ENCODE measurements at regions of chr2 and their contacts with region 1.

Region 1: GRCh38 chr2:84495539-84496146 is 20.7 kb upstream of the DNAH6 start:
- DNase-seq: peak in 1 of 2 donors; percentile 88
- ATAC-seq: peak; percentile 89 to 100 (median 99)
- H3K4me3 ChIP-seq: no peak overlapping the region
- H3K4me3 Mint-ChIP-seq: no peak overlapping the region
- H3K27ac ChIP-seq: no peak overlapping the region
- H3K27ac Mint-ChIP-seq: no peak overlapping the region
- H3K4me1 ChIP-seq: peaks cover 3% of the 10 kb centered on the region
- H3K4me1 Mint-ChIP-seq: peaks cover 0 to 6% of the 10 kb centered on the region in 2 donors
- H3K27me3 ChIP-seq: no peaks in the 10 kb centered on the region
- H3K27me3 Mint-ChIP-seq: peaks cover 12 to 19% of the 10 kb centered on the region in 2 donors
- CTCF ChIP-seq: peak; percentile 84

Region 2: GRCh38 chr2:84395820-84396219 is 99.8 kb before region 1 on chr2:
- intact Hi-C with region 1: no loop called
- DNase-seq: no peak
- ATAC-seq: no peak
- H3K4me3 ChIP-seq: no peak overlapping the region
- H3K4me3 Mint-ChIP-seq: no peak overlapping the region
- H3K27ac ChIP-seq: no peak overlapping the region
- H3K27ac Mint-ChIP-seq: no peak overlapping the region
- H3K4me1 ChIP-seq: no peaks in the 10 kb centered on the region
- H3K4me1 Mint-ChIP-seq: no peaks in the 10 kb centered on the region
- H3K27me3 ChIP-seq: no peaks in the 10 kb centered on the region
- H3K27me3 Mint-ChIP-seq: peaks cover 0 to 6% of the 10 kb centered on the region in 2 donors
- CTCF ChIP-seq: no peak

Region 3: DNA sequence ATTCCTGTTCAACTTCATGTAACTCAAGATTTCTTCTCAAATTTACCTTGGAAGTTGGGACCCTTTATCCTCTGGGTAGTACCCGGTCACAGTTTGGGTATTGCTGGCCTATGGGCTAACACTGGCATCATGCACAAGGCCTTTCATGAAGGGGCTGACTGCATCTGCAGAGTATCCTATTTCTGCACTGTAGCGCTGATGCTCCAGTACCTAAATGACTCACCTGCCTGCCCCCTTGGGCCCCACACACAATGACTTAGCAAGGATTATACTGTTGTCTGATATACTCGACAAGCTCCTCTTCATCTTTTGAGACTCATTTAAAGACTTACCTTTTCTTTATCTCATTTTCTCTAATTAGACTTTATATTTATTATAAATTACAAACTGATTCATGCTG is 60.5 kb after region 1 on chr2:
- intact Hi-C with region 1: no loop called
- DNase-seq: no peak
- ATAC-seq: no peak
- H3K4me3 ChIP-seq: no peak overlapping the region
- H3K4me3 Mint-ChIP-seq: no peak overlapping the region
- H3K27ac ChIP-seq: no peak overlapping the region
- H3K27ac Mint-ChIP-seq: no peak overlapping the region
- H3K4me1 ChIP-seq: no peaks in the 10 kb centered on the region
- H3K4me1 Mint-ChIP-seq: no peaks in the 10 kb centered on the region
- H3K27me3 ChIP-seq: peaks cover 2% of the 10 kb centered on the region
- H3K27me3 Mint-ChIP-seq: peaks cover 8 to 22% of the 10 kb centered on the region in 2 donors
- CTCF ChIP-seq: no peak

Region 4: GRCh38 chr2:84631047-84631446 is 135.4 kb after region 1 on chr2:
- intact Hi-C with region 1: loop called (anchors 2 kb)
- DNase-seq: peak in 1 of 2 donors; percentile 63
- ATAC-seq: peak in 2 of 3 donors; percentile 65 to 70
- H3K4me3 ChIP-seq: no peak overlapping the region
- H3K4me3 Mint-ChIP-seq: no peak overlapping the region
- H3K27ac ChIP-seq: no peak overlapping the region
- H3K27ac Mint-ChIP-seq: no peak overlapping the region
- H3K4me1 ChIP-seq: peaks cover 5% of the 10 kb centered on the region
- H3K4me1 Mint-ChIP-seq: peaks cover 22 to 25% of the 10 kb centered on the region in 2 donors
- H3K27me3 ChIP-seq: no peaks in the 10 kb centered on the region
- H3K27me3 Mint-ChIP-seq: no peaks in the 10 kb centered on the region
- CTCF ChIP-seq: peak; percentile 51

Region 5: DNA sequence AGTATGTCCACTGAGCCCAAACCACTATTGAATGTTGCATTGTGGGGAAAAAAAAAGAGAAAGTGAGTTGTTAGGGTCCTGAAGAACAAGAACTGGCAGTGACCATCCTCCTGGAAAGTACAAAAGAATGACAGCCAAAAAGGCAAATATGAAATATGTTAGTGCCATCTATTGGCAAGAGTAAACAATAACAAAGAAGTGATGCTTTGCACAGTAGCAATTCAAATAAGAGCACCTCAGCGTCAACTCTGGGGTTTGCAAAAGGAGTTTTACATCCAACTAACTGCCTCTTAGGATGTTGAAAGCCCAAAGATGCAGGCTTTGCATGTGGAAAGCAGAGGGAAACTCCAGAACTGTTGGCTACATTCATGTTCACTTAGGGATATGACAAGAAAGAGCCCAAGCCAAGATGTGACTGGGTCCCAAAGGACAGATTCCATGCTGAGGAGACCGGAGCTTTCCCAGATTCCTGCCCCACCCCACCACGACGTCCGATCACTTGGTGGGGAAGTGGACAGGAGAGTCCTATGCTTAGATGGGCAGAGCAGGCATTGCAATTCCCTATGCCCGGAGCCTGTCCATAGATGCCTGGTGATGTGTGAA is 369.6 kb after region 1 on chr2:
- intact Hi-C with region 1: loop called (anchors 1 kb)
- DNase-seq: peak in 1 of 2 donors; percentile 72
- ATAC-seq: peak; percentile 67 to 87 (median 85)
- H3K4me3 ChIP-seq: no peak overlapping the region
- H3K4me3 Mint-ChIP-seq: no peak overlapping the region
- H3K27ac ChIP-seq: no peak overlapping the region
- H3K27ac Mint-ChIP-seq: peak overlapping the region; percentile 75 to 80
- H3K4me1 ChIP-seq: peaks cover 9% of the 10 kb centered on the region
- H3K4me1 Mint-ChIP-seq: peaks cover 10 to 12% of the 10 kb centered on the region in 2 donors
- H3K27me3 ChIP-seq: no peaks in the 10 kb centered on the region
- H3K27me3 Mint-ChIP-seq: peaks cover 0 to 3% of the 10 kb centered on the region in 2 donors
- CTCF ChIP-seq: peak; percentile 77

Region 6: DNA sequence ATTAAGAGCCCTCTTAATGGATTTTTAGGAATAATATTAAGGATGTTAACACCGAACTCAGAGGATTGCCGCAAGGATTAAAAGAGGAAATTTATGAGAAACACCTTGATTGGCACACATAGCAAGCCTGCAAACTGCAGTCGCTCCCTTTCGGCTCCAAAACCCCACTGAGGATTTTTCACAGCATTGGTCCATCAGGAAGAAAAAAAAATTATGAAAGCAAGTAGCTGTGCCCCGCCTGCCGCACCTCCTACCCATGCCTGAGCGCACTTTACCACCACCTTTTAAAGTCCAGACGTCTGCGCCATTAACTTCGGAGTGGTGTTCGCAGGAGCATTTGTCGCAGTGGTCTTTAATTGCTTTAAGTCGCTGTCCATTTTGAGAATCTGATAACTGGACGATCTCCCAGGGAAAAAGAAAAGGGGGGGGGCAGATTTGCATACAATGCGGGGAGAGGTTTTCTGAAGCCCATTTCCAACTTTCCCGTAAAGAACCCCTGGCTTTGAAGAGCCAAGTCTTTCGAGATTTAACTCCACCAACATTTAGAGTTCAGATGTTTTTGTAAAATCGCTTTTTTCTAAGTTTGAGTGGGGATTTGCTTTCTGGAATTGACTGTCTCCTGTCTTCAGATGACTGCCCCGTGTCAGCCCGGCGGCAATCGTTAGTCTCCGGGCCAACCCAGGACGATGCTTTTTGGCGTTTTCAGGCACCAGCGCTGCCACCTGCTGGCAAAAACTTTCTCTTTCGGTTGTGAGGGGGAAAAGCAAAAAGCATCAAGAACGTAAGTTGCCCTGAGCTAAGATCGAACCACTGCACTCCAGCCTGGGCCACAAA is 386.2 kb after region 1 on chr2:
- intact Hi-C with region 1: loop called (anchors 1 kb)
- DNase-seq: peak; percentile 76 to 93
- ATAC-seq: peak; percentile 87 to 89 (median 88)
- H3K4me3 ChIP-seq: peak overlapping the region; percentile 55
- H3K4me3 Mint-ChIP-seq: peak overlapping the region; percentile 98
- H3K27ac ChIP-seq: peak overlapping the region; percentile 52
- H3K27ac Mint-ChIP-seq: peak overlapping the region; percentile 21 to 71
- H3K4me1 ChIP-seq: peaks cover 29% of the 10 kb centered on the region
- H3K4me1 Mint-ChIP-seq: peaks cover 34 to 37% of the 10 kb centered on the region in 2 donors
- H3K27me3 ChIP-seq: peaks cover 8% of the 10 kb centered on the region
- H3K27me3 Mint-ChIP-seq: peaks cover 9 to 24% of the 10 kb centered on the region in 2 donors
- CTCF ChIP-seq: peak; percentile 77

Region 7: DNA sequence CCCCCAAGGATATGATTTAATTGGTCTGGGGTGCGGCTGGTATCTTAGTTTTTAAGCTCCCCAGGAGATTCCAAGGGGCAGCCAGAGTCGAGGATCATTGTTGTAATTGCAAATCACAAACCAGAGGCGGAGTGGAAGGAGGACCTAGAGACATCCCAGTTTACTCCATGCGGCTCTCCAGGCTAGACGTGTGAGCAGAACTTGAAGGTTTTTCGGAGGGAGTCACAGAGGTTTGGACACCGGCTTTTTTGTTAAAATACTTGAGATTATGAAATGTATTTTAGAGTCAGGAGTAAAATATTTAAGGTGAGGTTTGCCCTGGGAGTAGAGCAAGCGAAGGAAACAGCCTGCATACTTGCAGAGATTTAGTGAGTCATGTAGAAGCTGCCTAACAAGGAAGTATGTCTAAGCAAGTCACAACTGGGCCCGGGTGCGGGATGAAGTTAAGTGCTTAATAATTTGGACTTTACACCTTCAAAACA is 792.6 kb after region 1 on chr2:
- intact Hi-C with region 1: loop called (anchors 10 kb)
- DNase-seq: no peak
- ATAC-seq: no peak
- H3K4me3 ChIP-seq: no peak overlapping the region
- H3K4me3 Mint-ChIP-seq: no peak overlapping the region
- H3K27ac ChIP-seq: no peak overlapping the region
- H3K27ac Mint-ChIP-seq: no peak overlapping the region
- H3K4me1 ChIP-seq: peaks cover 8% of the 10 kb centered on the region
- H3K4me1 Mint-ChIP-seq: peaks cover 11 to 16% of the 10 kb centered on the region in 2 donors
- H3K27me3 ChIP-seq: no peaks in the 10 kb centered on the region
- H3K27me3 Mint-ChIP-seq: peaks cover 0 to 5% of the 10 kb centered on the region in 2 donors
- CTCF ChIP-seq: no peak

Measured in natural killer cell (primary cell).